ENCODE measurements at regions of chr20 and their contacts with region 1.

Region 1: DNA sequence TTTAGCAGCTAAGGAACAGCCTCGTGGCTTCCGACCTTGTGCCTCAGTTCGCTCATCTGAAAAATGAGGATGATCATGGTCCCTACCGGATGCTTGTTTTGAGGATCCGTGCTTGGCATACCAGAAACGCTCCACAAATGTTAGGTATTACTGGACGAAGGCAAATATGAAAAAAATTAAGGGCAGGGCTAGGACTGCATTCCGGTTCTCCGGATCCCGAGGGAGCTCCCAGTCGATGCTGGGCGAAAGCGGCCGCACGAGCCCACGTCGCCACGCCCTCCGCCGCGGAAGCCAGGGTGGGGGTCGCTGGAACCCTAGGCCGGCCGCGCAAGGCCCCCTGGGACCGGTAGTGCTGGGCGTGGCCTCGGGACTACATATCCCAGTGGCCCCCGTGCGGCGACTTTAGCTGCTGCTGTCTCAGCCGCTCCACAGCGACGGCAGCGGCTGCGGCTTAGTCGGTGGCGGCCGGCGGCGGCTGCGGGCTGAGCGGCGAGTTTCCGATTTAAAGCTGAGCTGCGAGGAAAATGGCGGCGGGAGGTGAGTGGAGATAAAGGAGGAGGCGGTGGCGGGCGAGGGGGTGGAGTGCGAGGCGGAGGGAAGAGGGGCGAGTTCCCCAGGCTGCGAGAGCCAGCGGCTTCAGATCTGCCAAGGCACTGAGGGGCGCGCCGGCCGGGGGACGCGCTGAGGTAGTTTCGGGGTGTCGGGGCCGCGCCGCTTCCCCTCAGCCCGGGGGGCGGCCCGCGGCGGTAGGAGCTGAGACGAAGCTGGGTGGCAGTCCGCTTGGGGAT is at the start of gene NCOA3:
- DNase-seq: peak; percentile 97
- ATAC-seq: peak; percentile 94
- H3K4me3 ChIP-seq: peak within 1 kb of the TSS; percentile 72
- H3K27ac ChIP-seq: peak within 1 kb of the TSS; percentile 65
- H3K4me1 ChIP-seq: peaks cover 41% of the 10 kb centered on the region
- H3K27me3 ChIP-seq: no peaks in the 10 kb centered on the region
- CTCF ChIP-seq: peak; percentile 32
- total RNA-seq, gene NCOA3: 27.8 and 31.1 TPM in 2 replicates

Region 2: GRCh38 chr20:47392015-47392720 is 109.5 kb before region 1 on chr20:
- CTCF ChIA-PET with region 1: no interaction called
- POLR2A ChIA-PET with region 1: interaction called, 10 read pairs
- intact Hi-C with region 1: loop called (anchors 2 kb)
- DNase-seq: peak; percentile 99
- ATAC-seq: peak; percentile 82
- H3K4me3 ChIP-seq: peak overlapping the region; percentile 57
- H3K27ac ChIP-seq: peak overlapping the region; percentile 97
- H3K4me1 ChIP-seq: peaks cover 37% of the 10 kb centered on the region
- H3K27me3 ChIP-seq: no peaks in the 10 kb centered on the region
- CTCF ChIP-seq: no peak

Region 3: DNA sequence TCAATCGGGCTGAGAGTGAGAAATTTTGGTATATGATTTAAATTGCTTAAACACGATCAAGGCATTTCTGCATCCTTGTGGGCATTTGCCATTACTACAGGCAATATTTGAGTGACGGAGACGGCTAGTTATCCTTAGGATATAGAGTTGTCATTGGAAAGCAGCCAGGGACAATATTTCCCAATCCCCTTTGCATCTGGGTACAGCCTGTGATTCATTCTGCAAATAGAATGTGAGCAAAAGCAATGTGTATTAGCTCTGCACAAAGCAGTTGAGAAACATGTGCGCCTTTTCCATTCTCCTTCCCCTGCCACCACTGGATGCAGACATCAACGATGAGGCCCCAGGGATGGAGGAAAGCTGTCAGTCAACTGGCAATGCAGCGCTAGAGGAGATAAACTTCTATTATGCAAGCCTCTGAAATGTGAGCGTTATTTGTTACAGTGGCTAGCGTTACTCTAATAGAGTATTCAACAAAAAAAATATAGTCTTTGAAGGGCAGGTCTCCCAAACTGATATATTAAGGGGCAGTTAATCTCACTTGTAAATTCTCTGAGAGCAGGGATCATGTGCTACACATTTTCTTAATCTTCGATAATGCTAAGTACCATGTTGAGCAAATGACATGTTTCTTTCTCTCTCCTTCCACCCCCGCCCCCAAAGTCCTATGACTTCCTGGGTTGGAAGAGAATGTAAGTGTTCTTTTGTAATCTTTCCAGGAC is 37.1 kb before region 1 on chr20:
- CTCF ChIA-PET with region 1: no interaction called
- POLR2A ChIA-PET with region 1: no interaction called
- intact Hi-C with region 1: loop called (anchors 1 kb)
- DNase-seq: peak; percentile 100
- ATAC-seq: peak; percentile 98
- H3K4me3 ChIP-seq: no peak overlapping the region; the same call in 1 of the 2 replicates
- H3K27ac ChIP-seq: peak overlapping the region; percentile 78
- H3K4me1 ChIP-seq: peaks cover 22% of the 10 kb centered on the region
- H3K27me3 ChIP-seq: no peaks in the 10 kb centered on the region
- CTCF ChIP-seq: peak; percentile 71

Region 4: GRCh38 chr20:47568001-47568407 is 66.3 kb after region 1 on chr20:
- CTCF ChIA-PET with region 1: no interaction called
- POLR2A ChIA-PET with region 1: interaction called, 6 read pairs
- intact Hi-C with region 1: loop called (anchors 2 kb)
- DNase-seq: peak; percentile 89
- ATAC-seq: peak; percentile 89
- H3K4me3 ChIP-seq: no peak overlapping the region
- H3K27ac ChIP-seq: peak overlapping the region; percentile 61
- H3K4me1 ChIP-seq: peaks cover 29% of the 10 kb centered on the region
- H3K27me3 ChIP-seq: no peaks in the 10 kb centered on the region
- CTCF ChIP-seq: no peak

Region 5: GRCh38 chr20:47606983-47607613 is 105.4 kb after region 1 on chr20:
- CTCF ChIA-PET with region 1: no interaction called
- POLR2A ChIA-PET with region 1: interaction called, 15 read pairs
- intact Hi-C with region 1: no loop called
- DNase-seq: peak; percentile 46
- ATAC-seq: peak; percentile 56
- H3K4me3 ChIP-seq: no peak overlapping the region
- H3K27ac ChIP-seq: no peak overlapping the region
- H3K4me1 ChIP-seq: peaks cover 27% of the 10 kb centered on the region
- H3K27me3 ChIP-seq: no peaks in the 10 kb centered on the region
- CTCF ChIP-seq: no peak

Region 6: GRCh38 chr20:48246497-48247350 is 745.0 kb after region 1 on chr20:
- CTCF ChIA-PET with region 1: no interaction called
- POLR2A ChIA-PET with region 1: no interaction called
- intact Hi-C with region 1: no loop called
- DNase-seq: no peak
- ATAC-seq: no peak
- H3K4me3 ChIP-seq: no peak overlapping the region
- H3K27ac ChIP-seq: no peak overlapping the region
- H3K4me1 ChIP-seq: no peaks in the 10 kb centered on the region
- H3K27me3 ChIP-seq: peaks cover 22% of the 10 kb centered on the region; the same call in 1 of the 2 replicates
- CTCF ChIP-seq: no peak

Measured in PC-3 (cell line).